ENCODE measurements at regions of chr3 and their contacts with region 1.

Region 1: DNA sequence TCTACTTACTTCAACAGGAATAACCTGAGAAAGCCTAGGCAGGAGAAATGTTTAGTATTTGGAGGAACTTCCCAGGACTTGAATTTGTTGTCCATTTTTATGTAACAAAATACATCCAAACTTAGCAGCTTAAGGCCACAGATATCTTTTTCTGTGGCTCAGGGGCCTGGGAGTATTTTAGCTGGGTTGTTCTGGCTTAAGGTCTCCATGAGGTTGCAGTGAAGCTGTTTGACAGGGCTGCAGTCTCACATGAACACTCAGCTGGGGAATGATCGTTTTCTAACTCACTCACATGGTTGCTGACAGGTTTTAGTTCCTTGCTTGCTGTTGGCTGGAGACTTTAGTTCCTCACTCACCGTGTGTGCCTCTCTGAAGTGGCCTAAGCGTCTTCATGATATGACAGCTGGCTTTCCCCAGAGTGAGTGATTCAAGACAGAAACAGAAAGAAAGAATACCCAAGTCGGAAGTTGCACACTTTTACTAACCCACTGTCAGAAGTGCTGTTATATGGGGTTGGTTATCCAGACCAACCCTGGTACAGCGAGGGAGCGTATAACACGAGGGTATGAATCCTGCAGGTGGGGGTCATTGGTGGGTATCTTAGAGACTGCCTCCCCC is 229.7 kb upstream of the TBL1XR1 start:
- DNase-seq: peak; percentile 83
- H3K4me3 Mint-ChIP-seq: peak overlapping the region; percentile 55
- H3K27ac Mint-ChIP-seq: peak overlapping the region; percentile 91
- H3K4me1 Mint-ChIP-seq: peaks cover 42% of the 10 kb centered on the region
- H3K27me3 Mint-ChIP-seq: peaks cover 7% of the 10 kb centered on the region

Region 2: DNA sequence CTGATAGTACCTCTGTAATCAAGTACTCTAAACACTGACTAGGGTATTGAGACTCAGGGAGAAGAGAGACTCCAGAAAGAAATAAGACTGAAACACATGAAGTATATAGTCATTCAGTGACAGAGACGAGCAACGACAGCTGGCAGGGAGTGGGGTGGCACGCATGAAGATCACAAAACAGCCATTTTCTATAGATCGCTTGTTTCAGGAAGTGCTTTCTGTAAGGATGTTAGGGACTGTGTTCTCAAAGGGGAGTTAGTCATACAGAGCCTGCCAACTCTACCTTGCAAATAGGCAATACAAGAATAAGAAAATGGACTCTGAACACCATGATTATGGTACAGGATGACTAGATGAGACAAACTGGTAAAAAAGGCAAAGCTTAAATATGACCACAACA is 369.2 kb before region 1 on chr3:
- CTCF ChIA-PET with region 1: no interaction called
- POLR2A ChIA-PET with region 1: no interaction called
- intact Hi-C with region 1: loop called (anchors 2 kb)
- DNase-seq: peak; percentile 80
- H3K4me3 Mint-ChIP-seq: no peak overlapping the region
- H3K27ac Mint-ChIP-seq: no peak overlapping the region
- H3K4me1 Mint-ChIP-seq: peaks cover 39% of the 10 kb centered on the region
- H3K27me3 Mint-ChIP-seq: no peaks in the 10 kb centered on the region

Region 3: DNA sequence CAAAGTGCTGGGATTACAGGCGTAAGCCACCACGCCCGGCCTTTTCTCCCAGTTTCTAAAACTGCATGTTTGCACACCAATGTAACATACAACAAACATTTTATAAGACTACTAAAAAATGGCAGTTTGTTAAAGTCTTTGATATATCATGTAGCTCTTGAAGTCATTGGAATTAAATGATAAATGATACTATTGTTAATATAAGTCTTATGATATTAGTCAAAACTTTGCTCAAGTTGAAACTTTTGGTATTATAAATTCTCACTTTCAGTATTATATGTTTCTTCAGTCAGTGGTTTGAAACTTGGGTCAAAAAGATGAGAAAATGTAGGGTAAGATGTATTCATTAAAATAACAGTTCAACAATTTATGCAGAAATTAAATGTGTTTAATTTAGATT is 112.1 kb before region 1 on chr3:
- CTCF ChIA-PET with region 1: no interaction called
- POLR2A ChIA-PET with region 1: no interaction called
- intact Hi-C with region 1: loop called (anchors 2 kb)
- DNase-seq: peak; percentile 13
- H3K4me3 Mint-ChIP-seq: no peak overlapping the region
- H3K27ac Mint-ChIP-seq: peak overlapping the region; percentile 18
- H3K4me1 Mint-ChIP-seq: peaks cover 23% of the 10 kb centered on the region
- H3K27me3 Mint-ChIP-seq: peaks cover 2% of the 10 kb centered on the region

Region 4: GRCh38 chr3:177385831-177386301 is 41.1 kb before region 1 on chr3:
- CTCF ChIA-PET with region 1: no interaction called
- POLR2A ChIA-PET with region 1: no interaction called
- intact Hi-C with region 1: loop called (anchors 5 kb)
- DNase-seq: no peak
- H3K4me3 Mint-ChIP-seq: no peak overlapping the region
- H3K27ac Mint-ChIP-seq: no peak overlapping the region
- H3K4me1 Mint-ChIP-seq: peaks cover 6% of the 10 kb centered on the region
- H3K27me3 Mint-ChIP-seq: no peaks in the 10 kb centered on the region

Region 5: GRCh38 chr3:177597311-177598096 is 170.5 kb after region 1 on chr3:
- CTCF ChIA-PET with region 1: no interaction called
- POLR2A ChIA-PET with region 1: no interaction called
- intact Hi-C with region 1: loop called (anchors 1 kb)
- DNase-seq: peak; percentile 56
- H3K4me3 Mint-ChIP-seq: peak overlapping the region; percentile 47
- H3K27ac Mint-ChIP-seq: peak overlapping the region; percentile 88
- H3K4me1 Mint-ChIP-seq: peaks cover 75% of the 10 kb centered on the region
- H3K27me3 Mint-ChIP-seq: no peaks in the 10 kb centered on the region

Region 6: DNA sequence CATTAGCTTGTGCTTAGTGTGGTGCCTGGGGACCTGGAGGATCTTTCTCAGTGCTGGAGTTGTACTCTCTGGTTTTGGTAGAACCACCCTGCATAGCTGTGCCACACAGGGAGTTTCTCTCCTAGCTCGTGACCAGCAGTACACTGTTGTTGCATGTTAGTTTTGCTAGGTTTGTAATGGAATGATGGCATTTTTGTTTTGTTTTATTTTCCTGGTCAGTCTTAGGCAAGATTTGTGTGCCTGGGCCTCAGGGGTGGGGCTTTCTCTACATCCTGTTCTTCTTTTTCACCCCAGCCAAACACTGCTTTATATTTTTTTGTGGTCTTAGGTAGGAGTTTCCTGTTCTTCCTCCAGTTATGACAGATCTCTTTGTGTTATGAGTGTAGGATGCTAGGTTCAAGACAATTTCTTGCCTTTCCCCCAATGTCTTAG is 574.7 kb after region 1 on chr3:
- CTCF ChIA-PET with region 1: no interaction called
- POLR2A ChIA-PET with region 1: no interaction called
- intact Hi-C with region 1: loop called (anchors 1 kb)
- DNase-seq: peak; percentile 57
- H3K4me3 Mint-ChIP-seq: no peak overlapping the region
- H3K27ac Mint-ChIP-seq: peak overlapping the region; percentile 35
- H3K4me1 Mint-ChIP-seq: peaks cover 53% of the 10 kb centered on the region
- H3K27me3 Mint-ChIP-seq: no peaks in the 10 kb centered on the region

Measured in activated CD4-positive, alpha-beta memory T cell treated with anti-CD3 and anti-CD28 coated beads for 36 hours (primary cell).